ENCODE measurements at regions of chr16 and their contacts with region 1.

Region 1: DNA sequence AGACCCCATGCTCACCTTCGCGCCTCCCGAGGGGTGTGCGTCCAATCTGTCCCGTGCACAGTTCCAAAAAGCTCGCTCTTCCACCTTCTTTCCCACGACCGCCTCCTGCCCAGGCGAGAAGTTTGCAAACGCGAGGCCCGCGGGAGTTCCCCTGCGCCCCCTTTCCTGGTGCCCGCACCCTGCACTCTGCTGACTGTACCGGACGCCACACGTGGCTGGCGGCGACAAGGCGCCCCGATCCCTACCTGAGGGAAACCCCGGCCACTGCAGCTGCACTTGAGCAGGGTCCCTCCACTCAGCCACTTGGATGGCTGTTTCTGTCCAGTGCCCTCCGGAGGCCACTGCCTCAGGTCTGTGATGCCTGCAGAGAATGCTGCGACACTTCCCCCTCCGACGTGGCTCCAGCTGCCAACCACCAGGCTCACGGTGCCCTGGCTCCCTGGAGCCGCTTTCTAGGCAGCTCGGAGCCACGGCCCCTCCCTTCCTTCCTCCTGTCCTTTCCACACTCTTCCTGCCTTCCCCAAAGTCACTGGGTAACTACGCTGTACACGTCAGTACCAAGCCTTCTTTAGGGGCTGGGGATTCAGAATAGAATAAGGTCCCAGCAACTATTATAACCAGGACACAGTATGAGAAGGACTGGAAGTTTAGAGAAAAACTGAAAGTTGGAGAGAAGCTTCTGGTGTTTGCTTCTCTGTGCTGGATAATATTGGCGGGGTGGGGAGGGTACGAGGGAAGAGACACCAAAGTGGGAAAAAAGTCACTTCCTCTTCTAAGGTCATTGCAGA is at the start of gene MLKL:
- DNase-seq: peak; percentile 11
- ATAC-seq: peak; percentile 78
- H3K4me3 ChIP-seq: peak within 1 kb of the TSS; percentile 79
- H3K27ac ChIP-seq: peak within 1 kb of the TSS; percentile 97
- H3K4me1 ChIP-seq: peaks cover 9% of the 10 kb centered on the region
- H3K27me3 ChIP-seq: no peaks in the 10 kb centered on the region
- CTCF ChIP-seq: peak in 1 of 3 experiments; percentile 1; a peak in 1 of 6 replicates
- EP300 ChIP-seq: no peak
- POLR2A ChIP-seq: peak; percentile 82
- RAD21 ChIP-seq: no peak
- polyA plus RNA-seq, gene MLKL: 3.8 to 5.2 TPM

Region 2: DNA sequence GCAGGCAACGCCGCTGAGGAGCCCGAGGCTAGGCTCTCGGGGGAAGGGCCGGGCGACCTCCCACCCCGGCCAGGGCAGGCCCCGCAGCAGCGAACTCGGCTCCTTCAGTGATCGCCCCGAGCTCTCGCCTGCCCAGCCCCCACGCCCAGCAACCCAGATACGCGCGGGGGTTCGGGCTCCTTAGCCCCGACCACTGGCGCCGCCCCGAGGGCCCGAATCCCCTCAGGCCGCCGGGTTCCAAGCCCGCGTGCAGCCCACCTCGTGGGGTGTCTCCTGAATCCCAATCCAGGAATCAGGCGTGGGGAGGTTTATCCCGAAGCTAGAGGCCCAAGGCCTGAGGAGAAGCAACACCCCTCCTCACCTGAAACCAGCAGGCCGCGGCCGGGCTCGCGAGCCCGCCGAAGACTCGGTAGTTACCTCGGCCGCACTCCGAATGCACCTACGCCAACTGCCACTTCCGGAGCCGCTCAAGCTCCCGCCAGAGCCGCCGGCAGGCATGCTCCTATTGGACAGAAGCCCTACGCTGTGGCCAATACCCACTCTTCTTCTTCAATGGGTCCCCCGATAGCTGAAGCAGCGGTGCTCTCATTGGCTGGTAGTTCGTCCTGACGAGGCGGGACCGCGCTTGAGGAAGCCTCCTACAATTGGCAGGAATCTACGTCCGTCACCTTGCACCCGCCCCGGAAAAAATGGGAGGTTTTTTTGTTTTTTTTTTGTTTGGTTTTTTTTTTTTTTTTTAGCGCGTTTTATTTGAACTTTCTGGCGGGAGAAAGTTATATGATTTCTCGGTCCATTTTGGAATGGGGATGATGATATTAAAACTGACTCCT is 34.0 kb before region 1 on chr16 and contains the start of gene RFWD3:
- CTCF ChIA-PET with region 1: interaction called, 5 read pairs
- POLR2A ChIA-PET with region 1: interaction called, 28 read pairs
- RAD21 ChIA-PET with region 1: interaction called, 18 read pairs
- SMC1A ChIA-PET with region 1: interaction called, 26 read pairs
- in situ Hi-C with region 1: no loop called
- intact Hi-C with region 1: loop called (anchors 2 kb)
- DNase-seq: peak; percentile 94
- ATAC-seq: peak; percentile 100
- H3K4me3 ChIP-seq: peak within 1 kb of the TSS; percentile 76
- H3K27ac ChIP-seq: peak within 1 kb of the TSS; percentile 89
- H3K4me1 ChIP-seq: peaks cover 5% of the 10 kb centered on the region
- H3K27me3 ChIP-seq: no peaks in the 10 kb centered on the region
- CTCF ChIP-seq: no peak
- EP300 ChIP-seq: no peak
- POLR2A ChIP-seq: peak; percentile 99
- RAD21 ChIP-seq: no peak
- polyA plus RNA-seq, gene RFWD3: 10.7 to 16.3 TPM

Region 3: GRCh38 chr16:74785031-74785430 is 84.4 kb after region 1 on chr16:
- CTCF ChIA-PET with region 1: no interaction called
- POLR2A ChIA-PET with region 1: no interaction called
- RAD21 ChIA-PET with region 1: no interaction called
- SMC1A ChIA-PET with region 1: no interaction called
- in situ Hi-C with region 1: no loop called
- intact Hi-C with region 1: no loop called
- DNase-seq: no peak
- ATAC-seq: no peak
- H3K4me3 ChIP-seq: no peak overlapping the region
- H3K27ac ChIP-seq: no peak overlapping the region
- H3K4me1 ChIP-seq: no peaks in the 10 kb centered on the region
- H3K27me3 ChIP-seq: 0 out of 4 replicates have a peak, but pooled peaks cover 0 to 2% of the 10 kb centered on the region in 2 experiments
- CTCF ChIP-seq: no peak
- EP300 ChIP-seq: no peak
- POLR2A ChIP-seq: no peak
- RAD21 ChIP-seq: no peak

Region 4: GRCh38 chr16:74830648-74831047 is 130.0 kb after region 1 on chr16:
- CTCF ChIA-PET with region 1: no interaction called
- POLR2A ChIA-PET with region 1: no interaction called
- RAD21 ChIA-PET with region 1: no interaction called
- SMC1A ChIA-PET with region 1: no interaction called
- in situ Hi-C with region 1: no loop called
- intact Hi-C with region 1: no loop called
- DNase-seq: no peak
- ATAC-seq: no peak
- H3K4me3 ChIP-seq: no peak overlapping the region
- H3K27ac ChIP-seq: no peak overlapping the region
- H3K4me1 ChIP-seq: no peaks in the 10 kb centered on the region
- H3K27me3 ChIP-seq: no peaks in the 10 kb centered on the region
- CTCF ChIP-seq: no peak
- EP300 ChIP-seq: no peak
- POLR2A ChIP-seq: no peak
- RAD21 ChIP-seq: no peak